Endothelial cell of umbilical vein (primary cell): ENCODE measurements at regions of chr12 and their contacts with region 1.

Region 1: DNA sequence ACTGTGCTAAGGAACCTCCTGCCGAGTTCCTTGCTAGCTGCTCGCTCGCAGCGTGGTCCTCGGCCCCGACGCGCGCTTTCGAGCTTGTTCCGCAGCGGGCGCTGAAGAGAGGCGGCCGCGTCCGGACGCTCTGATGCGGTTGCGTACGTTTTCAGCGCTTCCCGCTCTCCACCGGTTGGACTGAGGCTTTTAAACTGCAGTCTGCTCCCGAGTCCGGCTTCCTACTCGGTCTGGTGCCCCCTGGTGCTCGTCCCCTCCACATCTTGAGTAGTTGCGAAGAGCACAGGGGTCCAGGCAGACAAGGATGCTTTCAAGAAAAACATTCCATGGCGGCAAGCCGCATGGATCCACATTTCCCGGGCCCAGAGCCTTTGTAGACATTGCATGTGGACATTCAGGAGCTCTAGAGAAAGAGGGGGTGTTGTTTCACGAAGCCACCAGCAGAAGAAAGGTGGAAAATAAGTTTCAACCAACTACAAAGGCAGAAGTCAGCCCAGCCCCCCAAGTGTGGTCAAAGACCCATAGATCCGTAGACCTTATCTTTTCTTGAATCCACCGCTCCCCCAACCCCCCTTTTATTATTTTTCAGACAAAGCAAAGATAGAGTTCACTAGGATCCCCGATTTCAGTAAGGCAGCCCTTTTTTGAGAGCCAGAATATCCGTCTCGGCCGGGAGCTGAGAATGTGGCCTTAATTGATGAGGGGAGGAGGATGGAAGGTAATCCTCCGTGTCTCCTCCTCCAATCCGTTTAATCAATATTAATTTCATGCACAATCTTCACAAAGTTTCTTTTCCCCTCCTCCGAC is 984 bp upstream of the WNK1 start:
- DNase-seq: peak; percentile 97
- H3K4me3 ChIP-seq: peak overlapping the region; percentile 35 to 62 (median 48)
- H3K27ac ChIP-seq: peak overlapping the region; percentile 41
- H3K4me1 ChIP-seq: peaks cover 26% of the 10 kb centered on the region
- H3K27me3 ChIP-seq: no peaks in the 10 kb centered on the region
- CTCF ChIP-seq: peak; percentile 79 to 86
- POLR2A ChIP-seq: peak; percentile 62

Region 2: GRCh38 chr12:575948-576612 is 175.3 kb before region 1 on chr12:
- CTCF ChIA-PET with region 1: interaction called, 182 read pairs
- POLR2A ChIA-PET with region 1: interaction called, 6 read pairs
- dilution Hi-C with region 1: no loop called
- intact Hi-C with region 1: loop called (anchors 1 kb)
- DNase-seq: peak; percentile 56
- H3K4me3 ChIP-seq: no peak overlapping the region
- H3K27ac ChIP-seq: no peak overlapping the region
- H3K4me1 ChIP-seq: peaks cover 22% of the 10 kb centered on the region
- H3K27me3 ChIP-seq: no peaks in the 10 kb centered on the region
- CTCF ChIP-seq: peak; percentile 94 to 98
- POLR2A ChIP-seq: no peak

Region 3: DNA sequence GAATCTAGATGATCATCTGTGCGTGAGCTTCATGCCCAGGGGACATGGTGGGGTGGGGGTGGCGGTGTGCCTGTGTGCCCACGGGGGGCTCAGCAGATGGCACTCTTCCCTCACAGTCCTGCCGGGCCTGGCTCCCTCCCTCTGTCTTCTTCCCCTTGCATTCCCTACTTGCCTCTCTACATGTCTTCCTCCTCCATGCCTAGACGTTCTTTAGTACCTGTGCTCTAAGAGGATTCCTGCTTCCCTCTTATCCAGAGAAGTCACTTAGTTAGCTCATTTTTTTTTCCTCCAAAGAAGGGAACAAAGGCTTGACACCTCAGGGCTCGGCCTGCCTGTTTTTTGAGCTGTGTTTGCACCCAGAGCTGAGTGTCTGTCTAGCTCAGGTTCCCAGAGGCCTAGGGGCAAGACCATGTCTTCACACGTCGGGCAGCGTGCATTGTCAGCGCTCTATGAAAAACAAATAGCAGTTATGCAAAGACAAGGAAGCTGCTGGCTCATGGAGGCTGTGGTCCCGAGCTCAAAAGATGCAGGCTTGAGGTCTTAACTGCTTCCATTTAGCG is 136.9 kb before region 1 on chr12:
- CTCF ChIA-PET with region 1: interaction called, 121 read pairs
- POLR2A ChIA-PET with region 1: no interaction called
- dilution Hi-C with region 1: no loop called
- intact Hi-C with region 1: loop called (anchors 1 kb)
- DNase-seq: peak; percentile 45
- H3K4me3 ChIP-seq: no peak overlapping the region
- H3K27ac ChIP-seq: no peak overlapping the region
- H3K4me1 ChIP-seq: peaks cover 23% of the 10 kb centered on the region
- H3K27me3 ChIP-seq: no peaks in the 10 kb centered on the region
- CTCF ChIP-seq: peak in 1 of 2 donors; percentile 48
- POLR2A ChIP-seq: no peak

Region 4: GRCh38 chr12:642633-643474 is 108.5 kb before region 1 on chr12:
- CTCF ChIA-PET with region 1: interaction called, 56 read pairs
- POLR2A ChIA-PET with region 1: interaction called, 3 read pairs
- dilution Hi-C with region 1: no loop called
- intact Hi-C with region 1: loop called (anchors 1 kb)
- DNase-seq: peak; percentile 52
- H3K4me3 ChIP-seq: peak overlapping the region in 1 of 3 experiments; percentile 40
- H3K27ac ChIP-seq: peak overlapping the region; percentile 87
- H3K4me1 ChIP-seq: peaks cover 41% of the 10 kb centered on the region
- H3K27me3 ChIP-seq: no peaks in the 10 kb centered on the region
- CTCF ChIP-seq: peak; percentile 1 to 35
- POLR2A ChIP-seq: peak; percentile 66

Region 5: GRCh38 chr12:737122-737739 is 14.2 kb before region 1 on chr12:
- CTCF ChIA-PET with region 1: interaction called, 29 read pairs
- POLR2A ChIA-PET with region 1: no interaction called
- dilution Hi-C with region 1: no loop called
- intact Hi-C with region 1: no loop called
- DNase-seq: peak; percentile 44
- H3K4me3 ChIP-seq: no peak overlapping the region
- H3K27ac ChIP-seq: no peak overlapping the region
- H3K4me1 ChIP-seq: peaks cover 16% of the 10 kb centered on the region
- H3K27me3 ChIP-seq: no peaks in the 10 kb centered on the region
- CTCF ChIP-seq: no peak
- POLR2A ChIP-seq: no peak

Region 6: GRCh38 chr12:949453-950191 is 198.2 kb after region 1 on chr12 and contains the start of gene RAD52:
- CTCF ChIA-PET with region 1: interaction called, 7 read pairs
- POLR2A ChIA-PET with region 1: no interaction called
- dilution Hi-C with region 1: no loop called
- intact Hi-C with region 1: loop called (anchors 1 kb)
- DNase-seq: peak; percentile 99
- H3K4me3 ChIP-seq: peak within 1 kb of the TSS; percentile 67 to 81 (median 76)
- H3K27ac ChIP-seq: peak within 1 kb of the TSS; percentile 41
- H3K4me1 ChIP-seq: peaks cover 15% of the 10 kb centered on the region
- H3K27me3 ChIP-seq: no peaks in the 10 kb centered on the region
- CTCF ChIP-seq: peak; percentile 93 to 97
- POLR2A ChIP-seq: no peak
- total RNA-seq, gene RAD52: 10.2 and 16.1 TPM in 2 replicates

Region 7: DNA sequence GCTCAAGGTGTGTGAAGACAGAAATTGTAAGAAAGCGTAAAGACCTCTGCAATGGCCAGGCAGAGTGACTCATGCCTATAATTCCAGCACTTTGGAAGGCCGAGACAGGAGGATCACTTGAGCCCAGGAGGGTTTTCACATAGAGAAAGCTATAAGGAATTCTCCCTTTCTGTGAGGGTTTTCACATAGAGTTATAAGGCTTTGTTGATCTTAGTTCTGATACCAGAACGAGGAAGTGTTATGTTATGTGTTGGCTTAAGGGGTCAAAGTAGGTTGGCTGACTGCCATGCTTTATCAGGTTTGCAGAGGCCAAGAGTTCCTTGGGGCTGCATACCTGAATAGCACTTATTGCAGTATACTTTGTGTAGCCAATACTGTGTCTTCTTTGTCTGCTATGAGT is 378.8 kb after region 1 on chr12:
- CTCF ChIA-PET with region 1: no interaction called
- POLR2A ChIA-PET with region 1: no interaction called
- dilution Hi-C with region 1: no loop called
- intact Hi-C with region 1: no loop called
- DNase-seq: peak; percentile 72
- H3K4me3 ChIP-seq: no peak overlapping the region
- H3K27ac ChIP-seq: no peak overlapping the region
- H3K4me1 ChIP-seq: peaks cover 8% of the 10 kb centered on the region
- H3K27me3 ChIP-seq: no peaks in the 10 kb centered on the region
- CTCF ChIP-seq: no peak
- POLR2A ChIP-seq: no peak